ENCODE measurements at regions of chr7 and their contacts with region 1.

Region 1: DNA sequence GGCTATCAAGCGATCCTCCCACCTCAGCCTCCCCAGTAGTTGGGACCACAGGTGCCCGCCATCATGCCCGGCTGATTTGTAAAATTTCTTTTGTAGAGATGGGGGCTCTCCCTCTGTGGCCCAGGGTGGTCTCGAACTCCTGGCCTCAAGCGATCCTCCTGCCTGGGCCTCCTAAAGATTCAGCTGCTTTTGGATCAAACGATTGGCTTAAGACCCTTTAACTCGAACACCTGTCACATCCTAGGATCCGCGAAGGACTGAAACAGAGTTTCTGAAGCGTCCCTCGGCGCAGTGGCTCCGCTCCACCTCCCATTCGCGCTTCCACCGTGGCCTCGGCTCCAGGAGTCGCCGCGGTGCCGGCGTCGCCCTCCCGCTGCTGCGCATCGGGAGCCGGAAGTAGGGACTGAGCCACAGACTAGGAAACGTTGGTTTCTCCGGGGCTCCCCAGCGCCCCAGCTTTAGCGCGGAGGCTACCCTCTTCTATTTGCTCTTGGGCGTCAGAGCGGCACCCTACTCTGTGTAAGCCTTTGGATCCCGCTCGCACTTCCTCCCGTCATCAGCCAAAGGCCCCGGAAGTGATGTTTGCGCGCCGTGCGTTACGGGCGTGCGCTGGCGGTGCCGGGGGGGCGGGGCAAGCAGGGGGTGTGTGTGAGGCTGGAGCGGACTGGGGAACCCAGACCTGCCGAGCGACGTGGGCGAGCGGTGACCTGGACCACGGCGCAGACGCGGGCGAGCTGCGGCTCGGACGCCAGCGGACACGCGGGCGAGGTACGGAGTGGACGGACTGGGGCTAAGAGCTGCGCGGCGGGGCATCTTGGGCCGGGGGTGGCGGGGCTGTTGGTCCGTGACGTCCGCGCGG is 53.0 kb downstream of the KCTD7 start:
- DNase-seq: peak; percentile 93 to 94
- ATAC-seq: peak; percentile 98 to 99
- H3K4me3 ChIP-seq: peak overlapping the region; percentile 80 to 100 (median 98)
- H3K27ac ChIP-seq: peak overlapping the region; percentile 98 to 100 (median 99)
- H3K4me1 ChIP-seq: peaks cover 12 to 20% of the 10 kb centered on the region in 2 donors
- H3K27me3 ChIP-seq: no peaks in the 10 kb centered on the region
- CTCF ChIP-seq: peak in 1 of 5 experiments; percentile 6
- POLR2A ChIP-seq: peak; percentile 95 to 96

Region 2: GRCh38 chr7:66529883-66530610 is 151.7 kb before region 1 on chr7:
- in situ Hi-C with region 1: no loop called
- intact Hi-C with region 1: no loop called
- DNase-seq: no peak
- ATAC-seq: no peak
- H3K4me3 ChIP-seq: no peak overlapping the region
- H3K27ac ChIP-seq: no peak overlapping the region
- H3K4me1 ChIP-seq: no peaks in the 10 kb centered on the region
- H3K27me3 ChIP-seq: no peaks in the 10 kb centered on the region
- CTCF ChIP-seq: no peak
- POLR2A ChIP-seq: no peak

Region 3: GRCh38 chr7:66557608-66558143 is 124.0 kb before region 1 on chr7:
- in situ Hi-C with region 1: no loop called
- intact Hi-C with region 1: loop called (anchors 5 kb)
- DNase-seq: peak; percentile 27 to 55
- ATAC-seq: peak; percentile 64 to 73
- H3K4me3 ChIP-seq: no peak overlapping the region
- H3K27ac ChIP-seq: no peak overlapping the region
- H3K4me1 ChIP-seq: peaks cover 0 to 7% of the 10 kb centered on the region in 2 donors
- H3K27me3 ChIP-seq: no peaks in the 10 kb centered on the region
- CTCF ChIP-seq: peak; percentile 87 to 97 (median 91)
- POLR2A ChIP-seq: no peak

Region 4: DNA sequence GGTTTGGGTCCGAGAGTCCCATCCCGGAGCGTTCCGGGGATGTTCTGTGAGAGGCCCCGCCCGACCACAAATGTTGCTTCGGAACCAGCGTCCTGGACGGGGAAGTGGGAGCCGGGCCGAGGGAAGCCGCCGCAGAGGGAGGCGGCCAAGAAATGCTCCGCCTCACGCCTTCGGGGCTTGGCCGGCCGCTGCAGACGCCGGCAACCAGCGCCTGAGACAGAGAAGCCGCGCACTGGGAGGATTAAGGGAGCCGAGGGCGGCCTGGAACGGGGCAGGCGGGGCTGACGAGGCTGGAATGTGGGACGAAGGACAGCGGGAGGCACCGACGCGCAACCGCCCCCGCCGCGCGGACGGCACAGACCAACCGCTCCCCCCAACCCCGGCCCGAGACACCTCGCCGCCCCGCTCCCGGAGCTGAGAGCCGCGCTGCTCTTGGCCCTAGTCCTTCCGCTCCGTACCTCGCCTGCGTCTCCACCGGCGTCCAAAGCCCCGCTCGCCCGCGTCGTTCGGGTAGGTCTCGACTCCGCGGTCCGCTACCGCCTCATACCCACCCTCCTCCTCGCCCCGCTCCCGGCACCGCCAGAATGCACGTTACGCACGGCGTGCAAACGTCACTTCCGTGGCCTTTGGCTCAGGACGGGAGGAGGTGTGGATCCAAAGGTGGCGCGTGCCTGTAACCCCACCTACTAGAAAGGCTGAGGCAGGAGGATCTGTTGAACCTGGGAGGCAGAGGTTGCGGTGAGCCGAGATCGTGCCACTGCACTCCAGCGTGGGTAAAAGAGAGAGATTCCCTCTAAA is 89.7 kb before region 1 on chr7:
- in situ Hi-C with region 1: no loop called
- intact Hi-C with region 1: loop called (anchors 1 kb)
- DNase-seq: peak; percentile 88 to 92
- ATAC-seq: peak; percentile 97
- H3K4me3 ChIP-seq: peak overlapping the region; percentile 70 to 94 (median 88)
- H3K27ac ChIP-seq: peak overlapping the region; percentile 95 to 98 (median 96)
- H3K4me1 ChIP-seq: peaks cover 30 to 33% of the 10 kb centered on the region in 2 donors
- H3K27me3 ChIP-seq: no peaks in the 10 kb centered on the region
- CTCF ChIP-seq: no peak
- POLR2A ChIP-seq: peak; percentile 97 to 98

Region 5: DNA sequence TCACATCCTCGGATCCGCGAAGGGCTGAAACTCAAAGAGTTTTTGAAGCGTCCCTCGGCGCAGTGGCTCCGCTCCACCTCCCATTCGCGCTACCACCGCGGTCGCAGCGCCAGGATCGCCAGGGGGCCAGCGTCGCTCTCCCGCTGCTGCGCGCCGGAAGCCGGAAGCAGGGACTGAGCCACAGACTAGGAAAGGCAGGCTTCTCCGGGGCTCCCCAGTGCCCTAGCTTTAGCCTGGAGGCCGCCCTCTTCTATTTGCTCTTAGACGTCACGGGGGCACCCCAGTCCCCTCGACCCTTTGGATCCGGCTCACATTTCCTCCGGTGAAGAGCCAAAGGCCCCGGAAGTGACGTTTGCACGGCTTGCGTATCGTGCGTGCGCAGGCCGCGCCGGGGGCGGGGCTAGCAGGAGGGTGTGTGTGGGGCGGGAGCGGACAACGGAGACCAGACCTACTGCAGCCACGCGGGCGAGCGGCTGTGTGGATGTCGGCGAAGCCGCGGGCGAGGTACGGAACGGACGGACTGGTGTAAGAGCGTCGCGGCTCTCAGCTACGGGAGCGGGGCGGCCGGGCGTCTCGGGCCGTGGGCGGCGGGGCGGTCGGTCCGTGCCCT is 27.5 kb before region 1 on chr7:
- in situ Hi-C with region 1: no loop called
- intact Hi-C with region 1: loop called (anchors 1 kb)
- DNase-seq: peak; percentile 95 to 97
- ATAC-seq: peak; percentile 97
- H3K4me3 ChIP-seq: peak overlapping the region; percentile 81 to 99 (median 87)
- H3K27ac ChIP-seq: peak overlapping the region; percentile 89 to 100 (median 99)
- H3K4me1 ChIP-seq: peaks cover 11 to 13% of the 10 kb centered on the region in 2 donors
- H3K27me3 ChIP-seq: no peaks in the 10 kb centered on the region
- CTCF ChIP-seq: peak in 2 of 5 experiments; percentile 3 to 32
- POLR2A ChIP-seq: peak; percentile 97 to 99

Region 6: GRCh38 chr7:66740302-66740979 is 58.7 kb after region 1 on chr7 and contains the start of gene RABGEF1:
- in situ Hi-C with region 1: no loop called
- intact Hi-C with region 1: loop called (anchors 1 kb)
- DNase-seq: peak; percentile 95 to 96
- ATAC-seq: peak; percentile 91 to 92
- H3K4me3 ChIP-seq: peak within 1 kb of the TSS; percentile 82 to 100 (median 98)
- H3K27ac ChIP-seq: peak within 1 kb of the TSS; percentile 97 to 99 (median 98)
- H3K4me1 ChIP-seq: peaks cover 15 to 16% of the 10 kb centered on the region in 2 donors
- H3K27me3 ChIP-seq: no peaks in the 10 kb centered on the region
- CTCF ChIP-seq: peak in 1 of 5 experiments; percentile 16
- POLR2A ChIP-seq: peak; percentile 91 to 96
- total RNA-seq, gene RABGEF1: 18.8 to 29.7 (median 24.9) TPM